Heart right ventricle (tissue), 16 donors: ENCODE measurements at regions of chr16 and their contacts with region 1.

Region 1: GRCh38 chr16:30534368-30535105 is at the start of gene ZNF747:
- DNase-seq: peak; percentile 94
- ATAC-seq: peak; percentile 85 to 96 (median 94)
- H3K4me3 ChIP-seq: peak within 1 kb of the TSS; percentile 71 to 94 (median 80)
- H3K27ac ChIP-seq: peak within 1 kb of the TSS; percentile 78 to 98 (median 96)
- H3K4me1 ChIP-seq: peaks cover 0 to 39% (median 30%) of the 10 kb centered on the region in 9 donors
- H3K27me3 ChIP-seq: no peaks in the 10 kb centered on the region
- CTCF ChIP-seq: peak in 2 of 9 donors; percentile 3 to 26
- total RNA-seq, gene ZNF747: 8.5 to 14.3 (median 10.7) TPM

Region 2: DNA sequence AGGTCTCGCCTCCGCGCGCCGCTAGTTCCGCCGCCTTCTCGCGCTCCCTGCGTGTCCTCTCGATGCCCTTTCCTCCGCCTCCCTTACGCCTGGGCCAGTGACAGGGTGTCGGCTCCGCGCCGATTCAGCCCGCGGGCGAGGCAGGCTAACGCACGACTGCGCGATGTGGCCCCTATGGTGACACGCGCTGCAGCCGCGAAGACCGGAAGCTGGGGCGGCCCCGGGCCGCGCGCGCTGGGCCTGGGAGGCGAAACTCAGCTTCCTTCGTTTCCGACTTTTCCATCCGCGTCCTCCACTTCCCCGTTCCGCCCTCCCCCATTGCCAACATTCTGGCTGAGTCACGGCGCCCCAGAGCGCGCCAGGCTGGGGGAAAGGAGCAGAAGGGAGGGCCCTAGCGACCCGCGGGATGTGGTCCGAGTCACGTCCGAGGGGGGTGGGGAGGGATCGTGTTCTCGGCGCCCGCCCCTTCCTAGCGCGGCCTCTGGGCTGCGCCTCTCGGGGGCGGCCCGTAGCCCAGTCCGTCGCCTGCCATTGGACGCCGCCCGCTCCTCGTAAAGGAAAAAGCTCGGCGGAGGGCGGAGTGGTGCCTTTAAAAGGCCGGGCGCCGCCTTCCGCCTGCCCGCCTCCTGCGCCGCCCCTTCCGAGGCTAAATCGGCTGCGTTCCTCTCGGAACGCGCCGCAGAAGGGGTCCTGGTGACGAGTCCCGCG is 469.2 kb before region 1 on chr16 and contains the start of gene ALDOA:
- intact Hi-C with region 1: loop called in 1 of 10 experiments (anchors 10 kb)
- DNase-seq: peak; percentile 98
- ATAC-seq: peak; percentile 88 to 94 (median 91)
- H3K4me3 ChIP-seq: peak within 1 kb of the TSS; percentile 79 to 100 (median 92)
- H3K27ac ChIP-seq: peak within 1 kb of the TSS; percentile 97 to 100 (median 98)
- H3K4me1 ChIP-seq: peaks cover 19 to 68% (median 54%) of the 10 kb centered on the region in 9 donors
- H3K27me3 ChIP-seq: no peaks in the 10 kb centered on the region
- CTCF ChIP-seq: no peak
- total RNA-seq, gene ALDOA: 3,057 to 4,582 (median 3,914) TPM

Region 3: GRCh38 chr16:30551781-30552180 is 17.2 kb after region 1 on chr16:
- intact Hi-C with region 1: loop called in 4 of 10 experiments (anchors 2 kb)
- DNase-seq: no peak
- ATAC-seq: no peak
- H3K4me3 ChIP-seq: no peak overlapping the region
- H3K27ac ChIP-seq: peak overlapping the region in 8 of 10 donors; percentile 2 to 68 (median 40)
- H3K4me1 ChIP-seq: peaks cover 0 to 62% (median 33%) of the 10 kb centered on the region in 9 donors
- H3K27me3 ChIP-seq: no peaks in the 10 kb centered on the region
- CTCF ChIP-seq: no peak

Region 4: GRCh38 chr16:30557957-30558788 is 23.6 kb after region 1 on chr16 and contains the start of gene ZNF764:
- intact Hi-C with region 1: loop called in 9 of 10 experiments (anchors 1 to 2 kb)
- DNase-seq: peak; percentile 96 to 99
- ATAC-seq: peak; percentile 95 to 99 (median 97)
- H3K4me3 ChIP-seq: peak within 1 kb of the TSS; percentile 52 to 98 (median 80)
- H3K27ac ChIP-seq: peak within 1 kb of the TSS; percentile 86 to 99 (median 96)
- H3K4me1 ChIP-seq: peaks cover 0 to 64% (median 47%) of the 10 kb centered on the region in 9 donors
- H3K27me3 ChIP-seq: no peaks in the 10 kb centered on the region
- CTCF ChIP-seq: peak in 1 of 9 donors; percentile 12
- total RNA-seq, gene ZNF764: 6.3 to 15.3 (median 10.3) TPM

Region 5: DNA sequence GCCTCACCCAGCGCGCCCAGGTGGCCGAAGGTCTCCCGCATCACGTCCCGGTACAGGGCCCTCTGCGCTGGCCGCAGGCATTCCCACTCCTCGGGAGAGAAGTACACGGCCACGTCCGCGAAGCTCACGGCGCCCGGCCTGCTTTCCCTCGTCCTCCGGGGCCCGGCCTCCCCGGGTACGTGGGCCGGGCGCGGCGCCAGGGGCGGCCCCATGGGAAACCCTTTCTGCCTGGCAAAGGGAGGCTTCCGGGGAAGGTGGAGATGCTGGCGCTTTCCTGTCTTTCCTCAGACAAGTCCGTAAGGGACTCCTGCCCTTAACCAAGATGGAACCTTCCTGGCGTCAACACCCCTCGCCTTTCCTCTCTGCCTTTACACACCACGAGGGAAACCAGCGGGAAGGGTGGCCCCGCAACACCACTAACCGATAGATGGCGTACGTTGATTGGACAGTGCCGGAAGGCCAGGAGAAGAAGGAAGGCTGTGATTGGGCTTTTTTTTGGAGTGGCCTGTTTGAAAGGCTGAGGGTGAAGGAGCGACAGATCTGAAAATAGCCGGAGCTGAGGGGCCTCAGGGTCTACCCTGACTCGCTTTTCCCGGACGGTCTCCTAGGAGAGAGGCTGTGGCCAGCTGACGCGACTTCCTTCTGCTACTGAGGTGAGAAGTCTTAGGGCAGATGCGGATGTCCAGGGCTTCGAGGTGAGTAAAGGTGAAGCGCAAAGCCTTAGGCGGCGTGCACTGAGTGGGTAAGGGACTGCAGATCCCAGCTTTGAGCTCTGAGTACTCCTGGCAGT is 51.1 kb after region 1 on chr16 and contains the start of gene ZNF785:
- intact Hi-C with region 1: loop called in 4 of 10 experiments (anchors 2 to 10 kb)
- DNase-seq: peak; percentile 91 to 99
- ATAC-seq: peak; percentile 98 to 100 (median 99)
- H3K4me3 ChIP-seq: peak within 1 kb of the TSS; percentile 63 to 93 (median 78)
- H3K27ac ChIP-seq: peak within 1 kb of the TSS; percentile 67 to 97 (median 94)
- H3K4me1 ChIP-seq: peaks cover 3 to 26% (median 13%) of the 10 kb centered on the region in 9 donors
- H3K27me3 ChIP-seq: no peaks in the 10 kb centered on the region
- CTCF ChIP-seq: peak in 7 of 9 donors; percentile 19 to 54 (median 42)
- total RNA-seq, gene ZNF785: 2.8 to 8.4 (median 5.4) TPM

Region 6: GRCh38 chr16:30609926-30610839 is 75.6 kb after region 1 on chr16 and contains the start of gene ZNF689:
- intact Hi-C with region 1: loop called in 1 of 10 experiments (anchors 10 kb)
- DNase-seq: peak; percentile 91 to 96
- ATAC-seq: peak; percentile 96 to 99 (median 99)
- H3K4me3 ChIP-seq: peak within 1 kb of the TSS; percentile 51 to 98 (median 93)
- H3K27ac ChIP-seq: peak within 1 kb of the TSS; percentile 66 to 99 (median 98)
- H3K4me1 ChIP-seq: peaks cover 0 to 33% (median 15%) of the 10 kb centered on the region in 9 donors
- H3K27me3 ChIP-seq: no peaks in the 10 kb centered on the region
- CTCF ChIP-seq: no peak
- total RNA-seq, gene ZNF689: 4.0 to 7.4 (median 5.6) TPM

Region 7: GRCh38 chr16:30644334-30644830 is 109.8 kb after region 1 on chr16:
- intact Hi-C with region 1: no loop called
- DNase-seq: no peak
- ATAC-seq: no peak
- H3K4me3 ChIP-seq: no peak overlapping the region
- H3K27ac ChIP-seq: no peak overlapping the region
- H3K4me1 ChIP-seq: peaks cover 0 to under 1% (median 0%) of the 10 kb centered on the region in 9 donors
- H3K27me3 ChIP-seq: no peaks in the 10 kb centered on the region
- CTCF ChIP-seq: no peak

Region 8: DNA sequence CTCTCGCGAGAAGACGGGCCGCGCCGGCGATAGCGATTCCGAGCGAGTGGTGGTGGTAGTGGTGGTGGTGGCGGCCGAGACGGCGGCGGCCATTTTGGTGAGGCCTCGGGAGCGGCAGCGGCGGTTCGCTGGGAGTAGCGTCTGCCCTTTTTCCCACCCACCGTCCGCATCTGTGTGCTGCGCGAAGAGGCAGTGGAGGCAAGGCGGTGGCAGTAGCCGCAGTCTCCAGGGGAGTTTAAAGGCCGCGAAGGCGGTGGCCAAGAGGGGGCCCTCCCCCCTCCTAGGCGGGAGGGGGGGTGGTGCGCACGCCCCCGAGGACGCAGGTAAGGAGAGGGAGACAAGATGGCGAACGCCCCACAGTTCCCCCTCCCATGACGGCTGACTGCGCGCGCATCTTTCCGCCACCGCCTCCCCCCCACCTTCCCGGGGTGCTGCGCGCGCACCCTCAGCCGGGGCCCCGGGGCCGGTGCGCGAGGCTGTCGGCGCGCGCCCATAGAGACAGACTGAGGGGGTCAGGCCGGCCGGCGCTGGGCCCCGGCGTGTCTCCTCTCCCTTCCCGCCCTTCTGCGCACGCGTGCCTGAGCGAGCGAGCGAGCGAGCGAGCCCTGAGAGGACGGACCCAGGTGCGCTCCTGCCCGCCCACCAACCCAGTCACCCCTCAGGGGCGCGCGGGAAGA is 163.7 kb after region 1 on chr16:
- intact Hi-C with region 1: loop called in 1 of 10 experiments (anchors 5 kb)
- DNase-seq: peak; percentile 99
- ATAC-seq: peak; percentile 86 to 94 (median 90)
- H3K4me3 ChIP-seq: peak overlapping the region; percentile 84 to 100 (median 94)
- H3K27ac ChIP-seq: peak overlapping the region; percentile 97 to 100 (median 100)
- H3K4me1 ChIP-seq: peaks cover 0 to 43% (median 31%) of the 10 kb centered on the region in 9 donors
- H3K27me3 ChIP-seq: no peaks in the 10 kb centered on the region
- CTCF ChIP-seq: no peak